ENCODE measurements at regions of chr18 and their contacts with region 1.

Region 1: GRCh38 chr18:69127873-69128500 is 272.7 kb upstream of the DOK6 start:
- DNase-seq: no peak
- ATAC-seq: peak in 4 of 8 donors; percentile 29 to 69 (median 50)
- H3K4me3 ChIP-seq: no peak overlapping the region
- H3K27ac ChIP-seq: no peak overlapping the region
- H3K4me1 ChIP-seq: no peaks in the 10 kb centered on the region
- H3K27me3 ChIP-seq: no peaks in the 10 kb centered on the region
- CTCF ChIP-seq: no peak

Region 2: GRCh38 chr18:69032009-69032408 is 96.0 kb before region 1 on chr18:
- intact Hi-C with region 1: no loop called
- DNase-seq: no peak
- ATAC-seq: no peak
- H3K4me3 ChIP-seq: no peak overlapping the region
- H3K27ac ChIP-seq: no peak overlapping the region
- H3K4me1 ChIP-seq: peaks cover 0 to 17% (median 0%) of the 10 kb centered on the region in 9 donors
- H3K27me3 ChIP-seq: no peaks in the 10 kb centered on the region
- CTCF ChIP-seq: no peak

Region 3: DNA sequence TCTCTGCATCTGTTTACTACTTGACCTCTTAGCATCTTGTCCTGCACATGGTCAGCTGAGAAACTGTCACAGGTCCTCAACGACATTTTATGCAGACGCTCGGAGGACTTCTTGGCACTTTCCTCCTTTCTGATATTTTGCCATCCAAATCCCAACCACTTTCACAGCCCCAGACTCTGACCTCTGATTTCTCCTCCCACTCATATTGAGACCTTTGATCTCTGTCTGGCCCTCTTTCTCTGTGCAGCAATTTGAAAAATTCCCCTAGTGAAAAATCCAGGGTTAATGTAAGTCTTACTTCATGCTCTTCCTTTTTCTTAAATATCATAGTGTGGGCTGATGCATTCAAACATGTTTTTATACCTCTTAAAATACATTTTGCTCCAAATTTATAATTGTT is 56.3 kb before region 1 on chr18:
- intact Hi-C with region 1: no loop called
- DNase-seq: no peak
- ATAC-seq: no peak
- H3K4me3 ChIP-seq: no peak overlapping the region
- H3K27ac ChIP-seq: no peak overlapping the region
- H3K4me1 ChIP-seq: no peaks in the 10 kb centered on the region
- H3K27me3 ChIP-seq: no peaks in the 10 kb centered on the region
- CTCF ChIP-seq: no peak

Region 4: GRCh38 chr18:69172046-69172445 is 44.1 kb after region 1 on chr18:
- intact Hi-C with region 1: loop called in 1 of 10 experiments (anchors 10 kb)
- DNase-seq: no peak
- ATAC-seq: no peak
- H3K4me3 ChIP-seq: no peak overlapping the region
- H3K27ac ChIP-seq: no peak overlapping the region
- H3K4me1 ChIP-seq: no peaks in the 10 kb centered on the region
- H3K27me3 ChIP-seq: no peaks in the 10 kb centered on the region
- CTCF ChIP-seq: no peak